ENCODE measurements at regions of chr1 and their contacts with region 1.

Region 1: GRCh38 chr1:39973503-39974135 is 18.7 kb downstream of the MFSD2A start:
- DNase-seq: peak; percentile 58
- ATAC-seq: peak; percentile 86
- H3K4me3 Mint-ChIP-seq: no peak overlapping the region
- H3K27ac Mint-ChIP-seq: no peak overlapping the region
- H3K4me1 Mint-ChIP-seq: peaks cover 8% of the 10 kb centered on the region
- H3K27me3 Mint-ChIP-seq: no peaks in the 10 kb centered on the region
- CTCF ChIP-seq: peak; percentile 79

Region 2: GRCh38 chr1:39544327-39544726 is 429.3 kb before region 1 on chr1:
- CTCF ChIA-PET with region 1: no interaction called
- POLR2A ChIA-PET with region 1: no interaction called
- intact Hi-C with region 1: no loop called
- DNase-seq: no peak
- ATAC-seq: no peak
- H3K4me3 Mint-ChIP-seq: no peak overlapping the region
- H3K27ac Mint-ChIP-seq: no peak overlapping the region
- H3K4me1 Mint-ChIP-seq: peaks cover 21% of the 10 kb centered on the region
- H3K27me3 Mint-ChIP-seq: no peaks in the 10 kb centered on the region
- CTCF ChIP-seq: no peak

Region 3: DNA sequence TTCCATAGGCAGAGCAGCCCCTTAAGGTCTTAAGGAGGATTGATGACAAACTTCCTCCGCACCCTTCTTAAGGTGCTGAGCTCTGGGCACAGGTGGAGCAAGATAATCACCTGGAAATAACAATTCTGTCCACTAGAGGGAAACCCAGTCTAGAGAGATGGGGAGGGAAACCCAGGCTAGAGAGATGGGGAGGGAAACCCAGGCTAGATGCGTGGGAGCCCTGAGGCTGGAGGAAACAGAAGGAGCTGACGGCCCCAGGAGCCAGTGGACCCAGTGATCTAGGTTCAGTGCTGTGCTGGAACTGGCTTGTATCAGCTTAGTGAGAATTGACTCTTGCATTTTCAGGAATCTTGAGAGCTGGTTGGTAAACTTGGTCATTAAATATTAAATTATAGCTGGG is 54.1 kb before region 1 on chr1:
- CTCF ChIA-PET with region 1: interaction called, 157 read pairs
- POLR2A ChIA-PET with region 1: interaction called, 11 read pairs
- intact Hi-C with region 1: loop called (anchors 1 kb)
- DNase-seq: peak; percentile 22
- ATAC-seq: peak; percentile 99
- H3K4me3 Mint-ChIP-seq: no peak overlapping the region
- H3K27ac Mint-ChIP-seq: no peak overlapping the region
- H3K4me1 Mint-ChIP-seq: peaks cover 2% of the 10 kb centered on the region
- H3K27me3 Mint-ChIP-seq: no peaks in the 10 kb centered on the region
- CTCF ChIP-seq: no peak

Region 4: GRCh38 chr1:39926343-39926793 is 47.3 kb before region 1 on chr1:
- CTCF ChIA-PET with region 1: interaction called, 157 read pairs
- POLR2A ChIA-PET with region 1: no interaction called
- intact Hi-C with region 1: no loop called
- DNase-seq: no peak
- ATAC-seq: no peak
- H3K4me3 Mint-ChIP-seq: no peak overlapping the region
- H3K27ac Mint-ChIP-seq: no peak overlapping the region
- H3K4me1 Mint-ChIP-seq: peaks cover 5% of the 10 kb centered on the region
- H3K27me3 Mint-ChIP-seq: no peaks in the 10 kb centered on the region
- CTCF ChIP-seq: no peak

Region 5: DNA sequence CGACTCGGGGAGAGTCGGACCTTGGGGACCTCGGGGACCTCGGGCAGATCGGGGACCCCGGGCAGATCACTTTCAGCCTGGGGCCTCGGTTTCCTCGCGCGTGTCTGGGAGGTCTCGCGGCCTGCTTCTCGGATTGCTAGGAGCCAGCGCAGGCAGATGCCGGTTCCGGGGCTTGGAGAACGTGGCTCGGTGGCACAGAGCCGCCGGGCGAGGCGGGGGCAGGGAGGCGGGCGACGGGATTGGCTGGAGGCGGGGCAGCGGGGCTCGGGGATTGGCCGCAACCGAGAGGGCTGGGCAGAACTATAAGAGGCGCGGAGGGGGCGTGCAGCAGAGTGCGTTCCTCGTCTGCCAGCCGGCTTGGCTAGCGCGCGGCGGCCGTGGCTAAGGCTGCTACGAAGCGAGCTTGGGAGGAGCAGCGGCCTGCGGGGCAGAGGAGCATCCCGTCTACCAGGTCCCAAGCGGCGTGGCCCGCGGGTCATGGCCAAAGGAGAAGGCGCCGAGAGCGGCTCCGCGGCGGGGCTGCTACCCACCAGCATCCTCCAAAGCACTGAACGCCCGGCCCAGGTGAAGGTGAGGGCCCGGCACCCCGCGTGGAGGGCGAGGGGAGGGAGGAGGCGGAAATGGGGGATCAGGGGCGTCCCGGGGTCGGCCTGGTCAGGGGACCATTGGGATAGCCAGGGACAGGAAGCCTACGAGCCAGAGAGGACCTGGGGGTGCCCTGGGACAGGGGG is 18.6 kb before region 1 on chr1 and contains the start of gene MFSD2A:
- CTCF ChIA-PET with region 1: interaction called, 8 read pairs
- POLR2A ChIA-PET with region 1: interaction called, 5 read pairs
- intact Hi-C with region 1: loop called (anchors 2 kb)
- DNase-seq: peak; percentile 85
- ATAC-seq: peak; percentile 94
- H3K4me3 Mint-ChIP-seq: peak within 1 kb of the TSS; percentile 95
- H3K27ac Mint-ChIP-seq: peak within 1 kb of the TSS; percentile 86
- H3K4me1 Mint-ChIP-seq: peaks cover 41% of the 10 kb centered on the region
- H3K27me3 Mint-ChIP-seq: no peaks in the 10 kb centered on the region
- CTCF ChIP-seq: no peak
- total RNA-seq, gene MFSD2A: 30.3 and 36.0 TPM in 2 replicates

Region 6: DNA sequence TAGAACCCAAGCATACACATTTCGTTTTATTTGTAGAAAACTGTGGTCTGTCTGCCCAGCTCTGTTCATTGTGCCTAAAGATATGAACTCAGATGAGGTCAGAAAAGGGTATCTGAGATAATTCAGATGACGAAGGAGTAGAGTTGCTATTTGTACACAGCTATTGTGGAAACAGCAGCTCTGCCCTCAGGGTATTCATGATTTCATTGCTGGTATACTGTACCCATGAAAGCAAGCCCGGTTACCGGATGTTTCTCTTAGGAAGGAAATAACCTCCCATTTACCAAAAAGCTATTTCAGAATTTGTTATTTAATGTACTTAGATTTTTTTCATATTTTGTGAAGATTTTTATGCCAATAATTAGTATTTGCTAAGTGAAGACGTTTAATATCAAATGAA is 437.7 kb after region 1 on chr1:
- CTCF ChIA-PET with region 1: no interaction called
- POLR2A ChIA-PET with region 1: no interaction called
- intact Hi-C with region 1: no loop called
- DNase-seq: no peak
- ATAC-seq: no peak
- H3K4me3 Mint-ChIP-seq: no peak overlapping the region
- H3K27ac Mint-ChIP-seq: no peak overlapping the region
- H3K4me1 Mint-ChIP-seq: peaks cover 3% of the 10 kb centered on the region
- H3K27me3 Mint-ChIP-seq: no peaks in the 10 kb centered on the region
- CTCF ChIP-seq: no peak